Panc1 (cell line): ENCODE measurements at regions of chr1 and their contacts with region 1.

Region 1: GRCh38 chr1:61210435-61211154 is 128.2 kb downstream of the NFIA start:
- DNase-seq: no peak
- ATAC-seq: no peak
- H3K4me3 ChIP-seq: no peak overlapping the region
- H3K27ac ChIP-seq: no peak overlapping the region
- H3K4me1 ChIP-seq: no peaks in the 10 kb centered on the region
- H3K27me3 ChIP-seq: no peaks in the 10 kb centered on the region
- CTCF ChIP-seq: peak; percentile 38

Region 2: DNA sequence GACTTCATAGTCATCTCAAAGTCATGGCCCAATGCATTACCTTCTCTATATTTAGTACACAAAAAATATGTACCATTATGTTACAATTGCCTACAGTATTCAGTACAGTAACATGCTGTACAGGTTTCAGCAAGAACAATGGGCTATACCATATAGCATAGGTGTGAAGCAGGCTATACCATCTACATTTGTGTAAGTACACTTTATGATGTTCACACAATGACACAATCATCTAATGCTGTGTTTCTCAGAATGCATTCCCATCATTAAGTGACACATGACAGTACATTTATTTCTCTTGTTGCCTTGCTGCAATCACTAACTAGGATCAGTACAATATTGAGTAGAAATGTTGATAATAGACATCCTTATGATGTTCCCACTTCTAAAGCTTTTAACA is 174.7 kb before region 1 on chr1:
- CTCF ChIA-PET with region 1: no interaction called
- POLR2A ChIA-PET with region 1: no interaction called
- in situ Hi-C with region 1: no loop called
- intact Hi-C with region 1: no loop called
- DNase-seq: no peak
- ATAC-seq: no peak
- H3K4me3 ChIP-seq: no peak overlapping the region
- H3K27ac ChIP-seq: no peak overlapping the region
- H3K4me1 ChIP-seq: no peaks in the 10 kb centered on the region
- H3K27me3 ChIP-seq: no peaks in the 10 kb centered on the region
- CTCF ChIP-seq: no peak

Region 3: DNA sequence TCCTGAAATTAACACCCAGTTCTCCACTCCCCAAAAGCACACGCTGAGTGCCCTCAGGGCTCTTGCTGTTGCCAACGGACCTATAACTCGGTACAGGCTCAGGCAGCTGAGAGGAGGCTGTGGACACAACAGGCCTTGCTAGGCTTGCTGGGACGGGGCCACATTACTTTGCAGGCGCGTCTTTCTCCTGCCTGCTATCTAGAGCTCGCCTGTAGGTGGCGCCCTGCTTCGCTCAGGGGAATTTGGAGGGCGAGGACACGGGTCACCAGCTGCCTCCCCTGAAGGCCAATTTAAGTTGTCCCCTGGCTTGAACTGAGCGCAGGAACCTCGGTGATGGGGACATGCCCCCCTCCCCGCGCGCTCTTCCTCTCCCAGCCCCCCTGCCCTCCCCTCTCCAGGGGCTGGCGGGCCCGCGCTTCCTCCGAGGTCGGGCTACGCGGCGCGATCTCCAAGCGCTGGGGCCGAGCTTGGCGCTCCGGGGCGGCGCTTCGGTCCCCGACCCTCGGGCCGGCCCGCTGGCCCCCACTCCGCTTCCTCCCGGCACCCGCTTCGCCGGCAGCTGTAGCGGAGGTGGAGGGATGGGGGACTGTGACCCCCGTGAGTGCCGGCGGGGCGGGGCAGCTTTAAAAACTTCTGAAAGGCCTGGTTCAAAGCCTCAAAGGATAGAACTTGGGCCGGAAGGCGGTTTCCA is 160.6 kb before region 1 on chr1:
- CTCF ChIA-PET with region 1: no interaction called
- POLR2A ChIA-PET with region 1: interaction called, 11 read pairs
- in situ Hi-C with region 1: no loop called
- intact Hi-C with region 1: no loop called
- DNase-seq: peak; percentile 75
- ATAC-seq: peak; percentile 87
- H3K4me3 ChIP-seq: peak overlapping the region; percentile 70 to 76
- H3K27ac ChIP-seq: peak overlapping the region; percentile 77
- H3K4me1 ChIP-seq: peaks cover 25% of the 10 kb centered on the region
- H3K27me3 ChIP-seq: no peaks in the 10 kb centered on the region
- CTCF ChIP-seq: peak; percentile 96

Region 4: DNA sequence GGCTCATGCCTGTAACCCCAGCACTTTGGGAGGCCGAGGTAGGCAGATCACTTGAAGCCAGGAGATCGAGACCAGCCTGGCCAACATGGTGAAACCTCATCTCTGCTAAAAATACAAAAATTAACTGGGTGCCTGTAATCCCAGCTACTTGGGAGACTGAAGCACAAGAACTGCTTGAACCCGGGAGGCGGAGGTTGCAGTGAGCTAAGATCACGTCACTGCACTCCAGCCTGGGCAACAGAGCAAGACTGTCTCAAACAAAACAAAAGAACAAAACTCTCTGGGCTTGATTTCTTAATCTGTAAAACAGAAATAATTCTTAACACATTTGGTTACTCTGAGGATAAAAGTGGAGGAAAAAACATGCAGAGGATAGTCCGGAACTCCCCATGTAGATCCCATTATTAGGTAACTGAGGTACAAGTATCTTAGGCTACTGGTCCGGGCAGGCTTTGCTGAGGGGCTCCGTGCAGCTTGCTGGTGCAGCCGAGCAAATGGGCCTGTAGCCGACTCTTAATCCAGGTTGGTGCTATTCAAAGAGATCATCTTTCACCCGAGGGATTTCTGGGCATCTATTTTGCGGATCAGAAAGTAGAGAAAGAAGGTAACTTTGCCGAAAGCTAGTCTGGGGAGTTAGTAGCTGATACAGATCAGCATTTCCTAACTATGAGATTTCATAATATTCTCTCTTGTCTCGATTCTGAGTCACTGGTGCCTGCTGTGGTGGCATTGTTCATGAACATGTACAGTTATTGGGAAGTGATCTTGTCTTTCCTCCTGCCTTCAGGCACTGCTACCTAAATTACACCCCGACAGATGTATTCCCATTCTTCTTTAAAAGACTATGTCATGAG is 71.4 kb before region 1 on chr1:
- CTCF ChIA-PET with region 1: no interaction called
- POLR2A ChIA-PET with region 1: no interaction called
- in situ Hi-C with region 1: no loop called
- intact Hi-C with region 1: no loop called
- DNase-seq: no peak
- ATAC-seq: no peak
- H3K4me3 ChIP-seq: no peak overlapping the region
- H3K27ac ChIP-seq: no peak overlapping the region
- H3K4me1 ChIP-seq: peaks cover 21% of the 10 kb centered on the region
- H3K27me3 ChIP-seq: no peaks in the 10 kb centered on the region
- CTCF ChIP-seq: no peak

Region 5: DNA sequence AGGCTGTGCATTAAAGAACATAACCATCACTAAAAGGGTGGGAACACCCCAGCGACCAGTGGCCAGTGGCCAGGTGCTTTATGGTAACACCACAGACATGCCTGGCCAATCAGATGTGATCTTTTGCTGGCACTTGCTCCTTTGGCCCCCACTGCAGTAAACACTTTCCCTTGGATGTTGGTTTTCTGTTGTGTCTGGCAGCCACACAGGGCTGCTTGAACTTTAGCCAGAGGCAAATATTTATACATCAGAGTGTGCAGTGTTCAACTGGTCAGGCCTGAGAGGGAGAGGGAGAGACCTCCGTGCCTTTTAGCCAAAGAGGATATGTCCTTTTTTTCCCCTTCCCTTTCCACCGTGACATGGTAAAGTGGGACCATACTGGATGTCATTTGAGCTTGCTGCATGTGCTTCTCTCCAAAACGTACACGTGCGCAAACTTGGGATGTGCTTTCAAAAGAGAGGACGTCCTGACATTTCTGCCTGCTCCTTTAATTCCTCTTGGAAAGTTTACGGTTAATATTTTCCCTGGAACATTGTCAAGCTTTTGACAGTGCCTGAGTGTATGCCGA is 27.0 kb before region 1 on chr1:
- CTCF ChIA-PET with region 1: interaction called, 19 read pairs
- POLR2A ChIA-PET with region 1: no interaction called
- in situ Hi-C with region 1: no loop called
- intact Hi-C with region 1: no loop called
- DNase-seq: no peak
- ATAC-seq: peak; percentile 59
- H3K4me3 ChIP-seq: no peak overlapping the region
- H3K27ac ChIP-seq: peak overlapping the region; percentile 34; the same call in 1 of the 2 replicates
- H3K4me1 ChIP-seq: peaks cover 30% of the 10 kb centered on the region
- H3K27me3 ChIP-seq: no peaks in the 10 kb centered on the region
- CTCF ChIP-seq: no peak

Region 6: DNA sequence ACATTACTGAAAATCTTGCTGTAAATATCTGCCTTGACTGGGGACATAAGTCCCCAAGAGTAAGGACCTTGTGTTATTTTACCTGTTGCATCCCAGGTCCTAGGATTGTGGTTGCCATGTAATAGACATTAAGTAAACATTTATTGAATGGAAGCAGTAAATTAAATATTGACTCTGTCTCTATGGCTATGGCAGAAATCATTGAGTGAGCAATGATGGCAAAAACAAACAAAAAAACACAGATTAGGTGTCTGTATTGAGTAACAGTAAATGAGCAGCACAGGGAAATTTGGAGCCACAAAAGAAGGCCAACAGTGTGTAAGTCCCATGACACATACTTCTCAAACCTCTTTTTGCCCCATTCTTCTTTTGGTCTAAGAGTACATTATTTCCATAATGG is 112.2 kb after region 1 on chr1:
- CTCF ChIA-PET with region 1: no interaction called
- POLR2A ChIA-PET with region 1: no interaction called
- in situ Hi-C with region 1: no loop called
- intact Hi-C with region 1: no loop called
- DNase-seq: no peak
- ATAC-seq: 0 out of 2 replicates have a peak, but pooled peaks have one; percentile 48
- H3K4me3 ChIP-seq: no peak overlapping the region
- H3K27ac ChIP-seq: no peak overlapping the region
- H3K4me1 ChIP-seq: peaks cover 3% of the 10 kb centered on the region; the same call in 1 of the 2 replicates
- H3K27me3 ChIP-seq: no peaks in the 10 kb centered on the region
- CTCF ChIP-seq: no peak

Region 7: DNA sequence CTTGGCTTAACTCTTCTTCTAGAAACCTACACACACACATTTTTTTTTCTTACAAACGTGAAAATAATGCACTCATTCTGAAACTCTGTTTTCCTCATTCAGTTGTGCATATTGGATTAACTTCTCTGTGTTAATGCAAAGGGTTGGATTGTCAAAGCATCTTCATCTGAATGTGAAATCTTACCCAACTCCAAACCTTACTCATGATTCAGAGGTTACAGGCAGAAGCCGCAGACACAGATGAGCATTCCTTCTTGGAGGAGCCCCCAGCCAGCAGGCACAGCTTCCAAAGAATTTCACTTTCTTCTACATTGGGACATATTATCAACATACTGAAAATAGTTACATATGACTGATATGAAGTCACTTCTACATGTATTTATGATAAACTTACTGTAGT is 547.4 kb after region 1 on chr1:
- CTCF ChIA-PET with region 1: no interaction called
- POLR2A ChIA-PET with region 1: no interaction called
- in situ Hi-C with region 1: no loop called
- intact Hi-C with region 1: no loop called
- DNase-seq: no peak
- ATAC-seq: no peak
- H3K4me3 ChIP-seq: no peak overlapping the region
- H3K27ac ChIP-seq: no peak overlapping the region
- H3K4me1 ChIP-seq: peaks cover 12% of the 10 kb centered on the region; the same call in 1 of the 2 replicates
- H3K27me3 ChIP-seq: no peaks in the 10 kb centered on the region
- CTCF ChIP-seq: no peak